ENCODE measurements at regions of chr3 and their contacts with region 1.

Region 1: GRCh38 chr3:47781685-47782445 is at the start of gene SMARCC1:
- DNase-seq: peak; percentile 98
- H3K4me3 Mint-ChIP-seq: peak within 1 kb of the TSS; percentile 96
- H3K27ac Mint-ChIP-seq: peak within 1 kb of the TSS; percentile 98
- H3K4me1 Mint-ChIP-seq: peaks cover 28% of the 10 kb centered on the region
- H3K27me3 Mint-ChIP-seq: no peaks in the 10 kb centered on the region
- total RNA-seq, gene SMARCC1: 136 and 148 TPM in 2 replicates

Region 2: GRCh38 chr3:47282424-47283192 is 499.3 kb before region 1 on chr3 and contains the starts of genes KIF9 and KLHL18:
- intact Hi-C with region 1: loop called (anchors 5 kb)
- DNase-seq: peak; percentile 95
- H3K4me3 Mint-ChIP-seq: peak within 1 kb of the TSS; percentile 98
- H3K27ac Mint-ChIP-seq: peak within 1 kb of the TSS; percentile 100
- H3K4me1 Mint-ChIP-seq: peaks cover 45% of the 10 kb centered on the region
- H3K27me3 Mint-ChIP-seq: no peaks in the 10 kb centered on the region
- total RNA-seq, gene KIF9: 3.3 and 3.4 TPM in 2 replicates
- total RNA-seq, gene KLHL18: 48.3 and 48.7 TPM in 2 replicates

Region 3: DNA sequence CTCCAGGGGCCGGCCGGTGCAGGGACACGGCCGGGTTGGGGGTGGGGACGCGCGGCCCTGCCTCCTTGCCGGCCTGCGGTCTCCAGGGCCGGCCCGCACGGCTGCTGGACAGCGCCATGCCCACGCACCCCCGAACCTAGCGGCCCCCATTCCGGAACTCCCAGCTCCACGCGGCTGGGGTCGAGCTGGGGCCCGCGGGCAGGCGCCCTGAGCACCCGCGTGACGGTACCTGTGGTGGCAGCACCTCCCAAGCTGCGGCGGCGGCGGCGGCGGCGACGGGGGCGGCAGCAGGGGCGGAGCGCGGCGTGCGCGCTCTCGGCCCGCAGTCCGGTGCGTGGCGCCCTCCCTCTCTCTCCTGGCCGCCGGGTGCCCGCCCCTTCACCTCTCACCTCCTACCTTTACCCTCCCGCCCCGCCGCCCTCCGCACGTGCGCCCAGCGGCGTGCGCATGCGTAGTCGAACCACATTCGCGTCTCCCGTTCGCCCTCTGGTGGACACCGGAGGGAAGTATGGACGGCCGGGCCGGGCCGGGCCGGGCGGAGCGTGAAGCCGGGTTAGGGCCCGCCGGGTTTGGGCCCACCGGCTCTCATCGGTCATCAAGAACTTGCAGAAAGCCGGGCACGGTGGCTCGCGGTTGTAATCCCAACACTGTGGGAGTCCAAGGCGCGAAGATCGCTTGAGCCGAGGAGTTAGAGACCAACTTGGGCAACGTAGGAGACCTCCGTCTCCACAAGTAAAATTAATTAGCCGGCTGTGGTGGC is 306.1 kb before region 1 on chr3 and contains the start of gene SCAP:
- intact Hi-C with region 1: loop called (anchors 1 kb)
- DNase-seq: peak; percentile 95
- H3K4me3 Mint-ChIP-seq: peak within 1 kb of the TSS; percentile 92
- H3K27ac Mint-ChIP-seq: peak within 1 kb of the TSS; percentile 93
- H3K4me1 Mint-ChIP-seq: peaks cover 26% of the 10 kb centered on the region
- H3K27me3 Mint-ChIP-seq: no peaks in the 10 kb centered on the region
- total RNA-seq, gene SCAP: 86.3 and 91.2 TPM in 2 replicates

Region 4: DNA sequence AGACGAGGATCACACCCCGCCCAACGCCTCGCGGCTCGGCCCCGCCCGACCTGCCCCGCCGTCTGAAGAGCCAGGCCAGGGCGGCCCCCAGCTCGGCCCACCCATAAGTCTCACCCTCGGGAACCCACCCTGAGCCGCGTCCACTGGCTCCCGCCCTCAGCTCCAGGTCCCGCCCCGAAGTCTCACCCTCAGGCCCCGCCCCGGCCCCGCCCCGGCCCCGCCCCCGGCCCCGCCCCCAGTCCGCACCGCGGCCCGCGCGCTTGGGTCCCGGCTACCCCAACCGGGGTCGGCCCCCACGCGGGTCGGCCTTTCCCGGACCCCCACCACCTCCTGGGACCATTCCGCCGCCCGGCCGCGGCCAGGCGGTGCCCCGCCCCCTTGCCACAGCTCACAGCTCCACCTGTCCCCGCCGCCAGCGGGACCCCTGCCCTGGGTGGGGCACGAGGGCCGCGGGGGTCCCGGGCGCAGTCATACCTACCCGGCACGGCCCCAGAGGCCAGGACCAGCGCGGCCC is 203.7 kb before region 1 on chr3:
- intact Hi-C with region 1: loop called (anchors 5 kb)
- DNase-seq: peak; percentile 34
- H3K4me3 Mint-ChIP-seq: peak overlapping the region; percentile 53
- H3K27ac Mint-ChIP-seq: no peak overlapping the region
- H3K4me1 Mint-ChIP-seq: no peaks in the 10 kb centered on the region
- H3K27me3 Mint-ChIP-seq: peaks cover 32% of the 10 kb centered on the region

Region 5: DNA sequence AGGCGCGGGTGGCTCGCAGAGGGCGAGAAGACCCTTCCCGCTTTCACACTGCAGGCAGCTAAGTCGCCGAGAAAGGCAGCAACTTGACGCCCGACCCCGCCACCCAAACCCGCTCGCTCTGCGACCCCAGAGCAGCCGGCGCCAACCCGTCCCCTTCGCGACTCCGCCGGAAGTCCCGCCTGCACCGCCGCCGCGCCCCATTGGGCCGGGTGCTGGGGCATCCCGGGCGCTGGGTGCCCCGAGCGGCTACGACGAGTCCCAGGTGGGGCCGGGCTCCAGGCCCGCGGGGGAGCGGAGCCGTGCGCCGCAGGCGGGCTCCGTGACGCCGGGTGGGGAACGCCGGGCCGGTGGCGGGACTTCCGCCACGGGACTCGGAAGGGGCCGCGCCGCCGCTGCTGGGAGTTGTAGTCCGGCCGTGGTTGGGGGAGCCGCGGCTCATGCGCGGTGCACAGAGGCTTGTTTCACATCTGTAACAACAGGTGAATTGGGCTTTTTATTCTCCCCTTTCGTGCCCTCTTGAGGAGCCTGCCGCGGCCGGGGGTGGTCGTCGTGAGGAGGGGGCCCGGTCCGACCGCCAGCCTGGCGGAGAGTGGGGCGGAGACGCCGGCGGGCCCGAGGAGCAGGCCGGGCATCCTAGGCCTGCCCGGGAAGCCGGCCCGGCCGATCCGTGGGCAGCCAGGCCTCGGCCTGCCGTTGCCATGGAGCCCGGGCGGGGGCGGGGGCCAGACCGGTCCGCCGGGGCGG is 21.0 kb after region 1 on chr3 and contains the start of gene DHX30:
- intact Hi-C with region 1: loop called (anchors 1 kb)
- DNase-seq: peak; percentile 82
- H3K4me3 Mint-ChIP-seq: peak within 1 kb of the TSS; percentile 93
- H3K27ac Mint-ChIP-seq: peak within 1 kb of the TSS; percentile 95
- H3K4me1 Mint-ChIP-seq: peaks cover 19% of the 10 kb centered on the region
- H3K27me3 Mint-ChIP-seq: no peaks in the 10 kb centered on the region
- total RNA-seq, gene DHX30: 149 and 154 TPM in 2 replicates

Region 6: DNA sequence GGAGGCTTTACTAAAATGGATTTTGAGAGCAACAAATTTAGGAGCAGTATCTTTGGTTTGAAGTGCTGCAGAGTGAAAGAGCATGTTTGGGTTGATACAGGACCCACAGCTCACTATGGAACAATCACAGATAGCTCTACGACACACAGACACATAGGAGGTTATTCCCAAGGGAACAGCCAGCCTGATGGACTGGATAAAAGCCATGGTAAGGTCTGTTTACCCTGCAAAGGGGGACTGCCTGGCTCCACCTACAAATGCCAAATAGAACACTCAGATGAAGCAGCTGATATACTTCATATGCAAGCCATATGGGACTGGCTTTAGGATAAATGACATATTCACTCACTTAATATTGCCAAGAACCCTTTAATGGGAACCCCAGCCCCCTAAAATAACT is 330.9 kb after region 1 on chr3:
- intact Hi-C with region 1: loop called (anchors 1 kb)
- DNase-seq: no peak
- H3K4me3 Mint-ChIP-seq: peak overlapping the region; percentile 38
- H3K27ac Mint-ChIP-seq: peak overlapping the region; percentile 76
- H3K4me1 Mint-ChIP-seq: peaks cover 17% of the 10 kb centered on the region
- H3K27me3 Mint-ChIP-seq: peaks cover 2% of the 10 kb centered on the region

Region 7: DNA sequence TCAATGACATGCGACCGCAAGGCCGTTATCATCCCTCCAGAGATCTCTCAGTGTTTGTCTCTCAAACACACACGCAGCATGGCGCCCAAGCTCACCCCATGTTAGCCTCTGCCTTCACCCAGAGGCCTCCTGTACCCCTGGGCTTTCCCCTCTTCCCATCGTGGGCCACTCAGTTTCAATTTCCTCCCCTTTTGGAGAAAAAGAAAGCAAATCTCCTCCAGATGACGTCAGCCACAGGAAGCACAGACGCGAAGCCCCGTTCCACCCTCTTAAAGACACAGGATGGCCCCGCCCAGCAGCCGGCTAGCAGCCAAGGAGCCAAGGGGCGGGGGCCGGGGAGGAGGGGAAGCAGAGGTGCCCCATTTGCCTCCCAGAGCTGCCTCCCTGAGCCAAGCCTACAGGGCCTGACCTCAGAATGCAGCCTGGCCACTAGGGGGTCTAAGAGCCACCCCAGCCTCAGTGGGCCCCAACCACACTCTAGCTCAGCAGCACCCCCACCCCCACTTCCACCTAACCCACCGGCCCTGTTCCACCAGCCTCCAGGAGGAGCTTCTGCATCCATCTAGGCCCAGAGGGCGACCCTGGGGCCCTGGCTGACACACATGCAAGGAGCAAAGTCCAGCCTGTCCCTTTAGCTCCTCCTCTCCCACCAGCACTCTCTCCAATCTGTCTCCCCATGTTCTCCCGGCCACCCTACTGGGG is 691.2 kb after region 1 on chr3:
- intact Hi-C with region 1: loop called (anchors 10 kb)
- DNase-seq: peak; percentile 94
- H3K4me3 Mint-ChIP-seq: peak overlapping the region; percentile 82
- H3K27ac Mint-ChIP-seq: peak overlapping the region; percentile 95
- H3K4me1 Mint-ChIP-seq: peaks cover 64% of the 10 kb centered on the region
- H3K27me3 Mint-ChIP-seq: no peaks in the 10 kb centered on the region

Measured in activated T-helper 1 cell treated with anti-CD3 and anti-CD28 coated beads, Interleukin-12 subunit alpha, Interleukin-12 subunit beta, Interleukin-2, Interleukin-4 antibody, amounts not matched to agents 30 ng/mL and 10 ng/mL and 1 ng/mL, durations not matched to agents 14 hours and 24 hours and 36 hours (primary cell).